Astrocyte of the cerebellum (primary cell): ENCODE measurements at regions of chr15 and their contacts with region 1.

Region 1: DNA sequence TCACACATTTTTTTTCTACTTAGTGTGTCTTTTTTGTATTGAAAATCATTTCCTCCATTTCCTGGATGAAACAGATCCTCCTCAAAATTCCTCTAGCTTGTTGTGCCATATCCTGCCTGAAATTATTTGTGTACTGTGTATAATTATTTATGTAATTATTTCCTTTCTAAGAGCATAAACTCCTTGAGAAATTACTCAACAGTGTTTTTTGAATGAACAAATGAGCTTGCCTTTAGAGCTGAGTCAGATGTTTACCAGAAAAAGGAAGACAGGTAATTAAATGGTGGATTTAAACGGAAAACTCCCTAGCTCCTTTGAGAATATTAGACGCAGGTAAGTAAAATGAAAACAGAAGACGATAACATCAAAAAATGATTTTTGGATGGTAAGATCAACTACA is 13.2 kb upstream of the SECISBP2L start:
- DNase-seq: no peak
- H3K4me3 ChIP-seq: no peak overlapping the region
- CTCF ChIP-seq: no peak

Region 2: DNA sequence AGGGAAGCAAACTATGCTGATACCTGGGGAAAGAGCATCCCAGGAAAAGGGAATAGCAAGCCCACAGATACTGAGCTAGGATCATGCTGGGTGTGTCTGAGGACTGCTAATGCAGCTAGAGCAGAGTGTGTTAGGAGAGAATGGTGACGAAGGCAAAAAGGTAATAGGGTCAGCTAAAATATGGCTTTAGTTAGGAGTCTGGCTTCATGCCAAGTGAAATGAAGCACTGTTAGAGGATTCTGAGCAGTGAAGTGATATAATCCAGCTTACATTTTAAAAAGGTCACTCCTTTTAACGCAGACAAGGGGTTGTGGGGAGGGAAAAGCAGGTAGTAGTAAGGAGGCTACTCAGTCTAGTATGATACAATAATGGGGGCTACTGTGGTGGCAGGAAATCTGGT is 43.6 kb before region 1 on chr15:
- in situ Hi-C with region 1: loop called (anchors 5 kb)
- DNase-seq: no peak
- H3K4me3 ChIP-seq: no peak overlapping the region
- CTCF ChIP-seq: no peak

Region 3: GRCh38 chr15:49101536-49101935 is 42.0 kb after region 1 on chr15:
- in situ Hi-C with region 1: loop called (anchors 5 kb)
- DNase-seq: peak; percentile 2
- H3K4me3 ChIP-seq: no peak overlapping the region
- CTCF ChIP-seq: no peak

Region 4: GRCh38 chr15:49134683-49135341 is 75.3 kb after region 1 on chr15:
- in situ Hi-C with region 1: no loop called
- DNase-seq: no peak
- H3K4me3 ChIP-seq: no peak overlapping the region
- CTCF ChIP-seq: no peak